Left lung (tissue), 14 donors: ENCODE measurements at regions of chr5 and their contacts with region 1.

Region 1: DNA sequence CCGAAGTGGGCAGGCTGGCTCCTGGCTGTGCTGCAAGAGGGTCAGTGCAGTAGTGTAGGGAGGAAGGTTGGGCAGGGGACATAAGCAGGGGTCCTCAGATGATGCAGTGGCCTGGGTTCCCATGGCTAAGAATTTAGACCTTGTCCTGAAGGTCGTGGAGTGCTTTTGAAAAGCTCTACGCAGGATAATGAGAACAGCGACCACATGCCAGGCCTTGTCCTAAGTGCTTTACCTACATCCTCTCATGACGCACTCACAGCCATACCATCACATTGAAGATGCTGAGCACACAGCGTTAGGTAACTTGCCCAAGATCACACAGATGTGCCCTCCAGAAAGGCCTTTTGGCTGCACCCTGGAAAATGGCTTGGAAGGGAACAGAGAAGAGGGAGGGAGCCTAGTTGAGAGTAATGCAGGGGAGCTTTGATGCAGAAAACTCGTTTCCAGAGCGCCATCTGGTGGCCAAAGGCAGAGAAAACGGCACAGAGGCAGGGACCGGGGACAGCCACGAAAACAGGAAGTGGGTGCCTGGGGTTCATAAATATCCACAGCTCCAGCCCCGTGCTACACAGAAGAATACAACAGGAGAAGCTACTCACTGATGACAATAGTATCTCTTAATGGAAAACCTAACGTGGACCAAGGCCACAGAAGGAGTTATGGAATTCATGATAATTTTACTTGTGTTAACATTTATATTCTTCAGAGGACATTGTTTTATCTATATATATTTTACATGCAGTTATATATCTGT is 2.6 kb upstream of the PCDH12 start:
- DNase-seq: peak; percentile 87 to 92 (median 91)
- ATAC-seq: peak; percentile 92
- H3K4me3 ChIP-seq: no peak overlapping the region
- H3K27ac ChIP-seq: peak overlapping the region in 1 of 2 donors; percentile 69
- H3K4me1 ChIP-seq: peaks cover 9 to 43% of the 10 kb centered on the region in 2 donors
- H3K27me3 ChIP-seq: no peaks in the 10 kb centered on the region
- CTCF ChIP-seq: peak; percentile 85 to 99

Region 2: GRCh38 chr5:141691867-141692532 is 268.6 kb before region 1 on chr5:
- intact Hi-C with region 1: loop called in 1 of 2 experiments (anchors 5 kb)
- DNase-seq: peak; percentile 77 to 96 (median 86)
- ATAC-seq: peak; percentile 99
- H3K4me3 ChIP-seq: peak overlapping the region in 1 of 2 donors; percentile 4
- H3K27ac ChIP-seq: no peak overlapping the region
- H3K4me1 ChIP-seq: peaks cover 0 to 20% of the 10 kb centered on the region in 2 donors
- H3K27me3 ChIP-seq: no peaks in the 10 kb centered on the region
- CTCF ChIP-seq: peak; percentile 98 to 100